ENCODE measurements at regions of chr6 and their contacts with region 1.

Region 1: GRCh38 chr6:150169609-150170008 is 26.8 kb downstream of the PPP1R14C start:
- DNase-seq: no peak
- ATAC-seq: peak; percentile 55
- H3K4me3 Mint-ChIP-seq: no peak overlapping the region
- H3K27ac Mint-ChIP-seq: peak overlapping the region; percentile 38
- H3K4me1 Mint-ChIP-seq: peaks cover 29% of the 10 kb centered on the region
- H3K27me3 Mint-ChIP-seq: no peaks in the 10 kb centered on the region
- CTCF ChIP-seq: no peak

Region 2: GRCh38 chr6:150119173-150119572 is 50.4 kb before region 1 on chr6:
- CTCF ChIA-PET with region 1: no interaction called
- POLR2A ChIA-PET with region 1: interaction called, 10 read pairs
- intact Hi-C with region 1: no loop called
- DNase-seq: no peak
- ATAC-seq: no peak
- H3K4me3 Mint-ChIP-seq: no peak overlapping the region
- H3K27ac Mint-ChIP-seq: no peak overlapping the region
- H3K4me1 Mint-ChIP-seq: peaks cover 27% of the 10 kb centered on the region
- H3K27me3 Mint-ChIP-seq: peaks cover 3% of the 10 kb centered on the region
- CTCF ChIP-seq: no peak

Region 3: GRCh38 chr6:150184850-150185731 is 15.5 kb after region 1 on chr6:
- CTCF ChIA-PET with region 1: no interaction called
- POLR2A ChIA-PET with region 1: interaction called, 7 read pairs
- intact Hi-C with region 1: loop called (anchors 1 kb)
- DNase-seq: no peak
- ATAC-seq: peak; percentile 61
- H3K4me3 Mint-ChIP-seq: peak overlapping the region; percentile 28
- H3K27ac Mint-ChIP-seq: peak overlapping the region; percentile 74
- H3K4me1 Mint-ChIP-seq: peaks cover 40% of the 10 kb centered on the region
- H3K27me3 Mint-ChIP-seq: no peaks in the 10 kb centered on the region
- CTCF ChIP-seq: no peak

Measured in activated B cell treated with CpG ODN at 0.5 μM for 24 hours (primary cell).